OCI-LY7 (cell line): ENCODE measurements at regions of chr1 and their contacts with region 1.

Region 1: DNA sequence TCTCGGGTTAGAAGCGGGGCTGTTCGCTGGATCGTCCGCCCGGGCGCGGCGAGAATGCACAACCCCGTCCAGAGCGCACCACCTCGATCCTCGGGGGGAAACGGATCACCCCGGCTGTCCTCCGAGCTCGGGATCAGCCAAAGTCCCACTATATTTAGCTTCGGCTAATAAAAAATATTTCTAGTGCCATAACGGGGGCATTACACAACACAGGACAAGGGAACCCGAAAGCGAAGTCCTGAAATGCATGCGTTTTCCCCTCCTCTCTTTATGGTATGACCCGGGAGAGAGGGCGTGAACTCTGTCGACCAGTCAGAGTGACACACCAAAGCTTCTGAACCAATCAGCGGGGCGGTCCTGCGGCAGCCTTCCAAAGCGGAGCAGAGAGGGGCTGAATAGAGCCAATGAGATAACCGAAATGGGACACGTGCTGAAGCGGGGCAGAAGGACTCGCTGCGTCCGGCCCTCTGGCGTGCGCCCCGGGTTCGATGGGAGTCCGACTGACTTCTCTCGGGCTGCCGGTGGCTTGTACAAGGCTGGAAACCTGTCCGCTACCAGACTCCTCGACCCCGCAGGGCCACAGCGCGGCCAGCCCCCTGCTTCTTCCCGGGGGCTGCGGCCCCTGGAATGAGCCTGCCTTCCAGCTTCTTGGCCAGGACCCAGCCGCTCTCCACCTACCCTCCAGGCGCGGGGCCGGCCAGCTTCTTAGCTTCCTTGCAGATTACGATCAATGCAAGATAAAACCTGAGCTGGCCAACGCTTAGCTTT is at the start of gene ALDH4A1:
- DNase-seq: peak; percentile 98
- H3K4me3 ChIP-seq: peak within 1 kb of the TSS; percentile 81
- H3K27ac ChIP-seq: peak within 1 kb of the TSS; percentile 20
- H3K4me1 ChIP-seq: peaks cover 15% of the 10 kb centered on the region
- CTCF ChIP-seq: no peak
- total RNA-seq, gene ALDH4A1: 3.8 and 6.1 TPM in 2 replicates

Region 2: GRCh38 chr1:19096036-19096833 is 193.5 kb after region 1 on chr1:
- CTCF ChIA-PET with region 1: no interaction called
- POLR2A ChIA-PET with region 1: no interaction called
- intact Hi-C with region 1: loop called (anchors 10 kb)
- DNase-seq: no peak
- H3K4me3 ChIP-seq: no peak overlapping the region
- H3K27ac ChIP-seq: no peak overlapping the region
- H3K4me1 ChIP-seq: no peaks in the 10 kb centered on the region
- CTCF ChIP-seq: 0 out of 2 replicates have a peak, but pooled peaks have one; percentile 22

Region 3: DNA sequence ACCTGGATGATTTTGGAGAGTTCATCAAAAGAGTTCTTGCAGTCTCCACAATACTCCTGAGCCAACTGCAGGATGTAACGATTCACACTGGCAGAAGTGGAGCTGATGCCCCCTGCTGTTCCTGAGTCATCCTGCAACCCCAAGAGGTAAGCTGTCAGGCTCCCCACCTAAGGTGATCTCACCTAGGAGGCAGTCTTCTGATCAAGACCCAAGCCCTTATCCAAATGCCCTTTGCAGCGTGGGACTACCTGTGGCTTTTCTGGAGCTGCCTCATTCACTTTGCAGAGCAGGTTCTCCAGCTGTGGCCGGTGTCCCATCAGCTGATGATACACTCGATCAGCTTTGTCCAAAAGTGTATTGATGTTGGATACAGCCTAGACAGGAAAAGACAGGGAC is 211.0 kb after region 1 on chr1:
- CTCF ChIA-PET with region 1: no interaction called
- POLR2A ChIA-PET with region 1: no interaction called
- intact Hi-C with region 1: loop called (anchors 5 kb)
- DNase-seq: peak; percentile 42
- H3K4me3 ChIP-seq: no peak overlapping the region
- H3K27ac ChIP-seq: no peak overlapping the region
- H3K4me1 ChIP-seq: no peaks in the 10 kb centered on the region
- CTCF ChIP-seq: peak; percentile 75